Right ventricle myocardium superior (tissue), 1 donor: ENCODE measurements at regions of chr3 and their contacts with region 1.

Region 1: DNA sequence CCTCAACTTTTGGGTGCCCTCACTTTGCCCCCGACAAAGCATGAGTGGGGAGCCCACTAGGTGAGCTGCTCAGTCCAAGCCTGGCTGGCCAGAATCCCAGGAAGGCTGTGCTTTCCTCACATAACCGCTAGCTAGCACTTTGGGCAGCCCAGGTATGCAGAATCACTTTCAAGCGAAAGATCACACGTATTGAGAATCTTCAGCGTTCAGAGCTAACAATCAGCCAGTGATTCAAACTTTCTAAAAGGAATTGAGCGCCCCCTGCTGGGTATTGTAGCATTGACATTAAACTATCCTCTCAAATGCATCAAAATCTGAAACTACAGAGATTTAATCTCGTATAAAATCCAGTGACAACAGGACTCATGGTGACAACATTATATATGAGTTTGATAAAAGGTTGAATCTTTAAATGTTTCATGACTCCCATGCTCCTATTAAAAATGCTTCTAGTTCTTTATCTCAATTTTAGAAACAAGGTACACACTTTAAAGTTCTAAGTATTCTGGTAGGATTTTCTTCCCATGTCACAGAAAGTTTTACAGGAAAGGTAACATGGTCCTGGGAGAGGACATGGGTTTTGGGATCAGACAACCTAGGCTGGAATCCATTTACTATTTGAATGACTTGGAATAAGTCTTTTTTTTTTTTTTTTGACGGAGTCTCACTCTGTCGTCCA is 11.8 kb downstream of the ANAPC13 start:
- DNase-seq: no peak
- ATAC-seq: peak; percentile 75

Region 2: DNA sequence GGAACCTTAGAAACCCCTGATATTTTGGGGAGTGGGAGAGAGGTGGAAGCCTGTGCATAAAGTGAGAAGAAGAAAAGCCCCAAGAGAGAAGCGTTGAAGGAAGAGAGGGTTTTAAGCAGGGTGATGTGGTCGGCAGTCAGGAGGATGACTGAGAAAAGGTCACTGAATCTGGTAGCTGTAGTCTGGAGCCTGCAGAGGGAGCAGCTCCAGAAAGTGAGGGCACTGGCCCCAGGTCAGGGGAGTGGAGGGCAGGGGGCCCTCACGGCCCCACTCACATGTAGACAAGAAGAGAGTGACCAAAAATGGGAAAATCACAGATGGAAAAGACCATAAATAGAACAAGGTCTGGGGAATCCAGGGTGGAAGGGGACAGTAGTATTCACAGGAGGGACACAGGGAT is 328.8 kb before region 1 on chr3:
- intact Hi-C with region 1: no loop called
- DNase-seq: no peak
- ATAC-seq: no peak

Region 3: GRCh38 chr3:134308350-134308891 is 165.6 kb before region 1 on chr3:
- intact Hi-C with region 1: loop called (anchors 2 kb)
- DNase-seq: peak; percentile 87
- ATAC-seq: peak; percentile 76